GM13976 (cell line): ENCODE measurements at regions of chr21 and their contacts with region 1.

Region 1: GRCh38 chr21:29849735-29850176 is 90.0 kb downstream of the GRIK1 start:
- DNase-seq: peak; percentile 44
- CTCF ChIP-seq: peak; percentile 70

Region 2: GRCh38 chr21:29078869-29079767 is 770.6 kb before region 1 on chr21:
- in situ Hi-C with region 1: loop called (anchors 25 kb)
- DNase-seq: no peak
- CTCF ChIP-seq: no peak

Region 3: GRCh38 chr21:29232601-29233546 is 616.9 kb before region 1 on chr21:
- in situ Hi-C with region 1: no loop called
- DNase-seq: no peak
- CTCF ChIP-seq: no peak

Region 4: GRCh38 chr21:29477941-29478340 is 371.8 kb before region 1 on chr21:
- in situ Hi-C with region 1: loop called (anchors 10 kb)
- DNase-seq: no peak
- CTCF ChIP-seq: no peak

Region 5: GRCh38 chr21:29928537-29928936 is 78.8 kb after region 1 on chr21:
- in situ Hi-C with region 1: no loop called
- DNase-seq: no peak
- CTCF ChIP-seq: no peak